Activated CD4-positive, alpha-beta T cell treated with anti-CD3 and anti-CD28 coated beads for 36 hours (primary cell): ENCODE measurements at regions of chr13 and their contacts with region 1.

Region 1: DNA sequence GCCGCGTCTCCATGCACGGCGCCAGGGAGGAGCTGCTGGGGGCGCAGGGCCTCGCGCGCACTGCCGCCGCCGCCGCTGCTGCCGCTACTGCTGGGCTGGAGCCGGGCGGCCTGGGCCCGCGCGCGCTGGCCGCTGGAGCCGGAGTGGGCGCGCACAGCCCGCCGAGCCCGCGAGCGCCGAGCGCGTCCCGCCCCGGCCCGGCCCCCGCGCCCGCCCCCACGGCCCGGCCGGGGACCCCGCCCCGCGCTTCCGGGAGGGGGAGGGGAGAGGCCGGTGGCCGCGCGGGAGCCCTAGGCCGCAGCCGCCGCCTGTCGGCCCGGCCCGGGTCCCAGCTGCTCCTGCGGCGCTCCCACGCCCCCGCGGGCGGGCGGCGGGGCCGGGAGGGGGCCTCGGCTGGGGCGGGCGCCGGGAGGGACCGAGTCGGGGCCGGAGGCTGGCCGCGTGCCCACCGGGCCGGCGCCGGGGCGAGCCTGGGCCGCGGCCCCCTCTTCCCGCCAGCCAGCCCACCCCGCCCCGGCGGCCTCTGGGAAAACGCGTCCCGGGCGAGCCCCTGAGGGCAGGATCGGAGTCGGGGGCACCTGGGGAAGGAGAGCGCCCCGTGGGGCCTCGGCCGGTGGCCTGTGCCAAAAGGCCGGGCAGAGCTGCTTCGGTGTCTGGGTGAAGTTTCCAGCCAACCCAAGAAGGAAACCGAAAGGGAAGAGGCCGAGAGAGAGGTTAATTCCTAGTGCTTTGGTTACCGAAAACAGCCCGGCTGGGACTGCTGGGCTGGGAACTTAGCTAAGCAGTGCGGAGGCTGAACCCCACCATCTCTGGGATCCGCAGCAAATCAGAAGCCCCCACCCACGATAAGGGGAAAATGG is at the start of gene STK24:
- DNase-seq: peak; percentile 75
- ATAC-seq: peak; percentile 42
- H3K4me3 Mint-ChIP-seq: peak within 1 kb of the TSS; percentile 95
- H3K27ac Mint-ChIP-seq: peak within 1 kb of the TSS; percentile 76
- H3K4me1 Mint-ChIP-seq: peaks cover 39% of the 10 kb centered on the region
- H3K27me3 Mint-ChIP-seq: no peaks in the 10 kb centered on the region
- total RNA-seq, gene STK24: 146 to 173 TPM

Region 2: DNA sequence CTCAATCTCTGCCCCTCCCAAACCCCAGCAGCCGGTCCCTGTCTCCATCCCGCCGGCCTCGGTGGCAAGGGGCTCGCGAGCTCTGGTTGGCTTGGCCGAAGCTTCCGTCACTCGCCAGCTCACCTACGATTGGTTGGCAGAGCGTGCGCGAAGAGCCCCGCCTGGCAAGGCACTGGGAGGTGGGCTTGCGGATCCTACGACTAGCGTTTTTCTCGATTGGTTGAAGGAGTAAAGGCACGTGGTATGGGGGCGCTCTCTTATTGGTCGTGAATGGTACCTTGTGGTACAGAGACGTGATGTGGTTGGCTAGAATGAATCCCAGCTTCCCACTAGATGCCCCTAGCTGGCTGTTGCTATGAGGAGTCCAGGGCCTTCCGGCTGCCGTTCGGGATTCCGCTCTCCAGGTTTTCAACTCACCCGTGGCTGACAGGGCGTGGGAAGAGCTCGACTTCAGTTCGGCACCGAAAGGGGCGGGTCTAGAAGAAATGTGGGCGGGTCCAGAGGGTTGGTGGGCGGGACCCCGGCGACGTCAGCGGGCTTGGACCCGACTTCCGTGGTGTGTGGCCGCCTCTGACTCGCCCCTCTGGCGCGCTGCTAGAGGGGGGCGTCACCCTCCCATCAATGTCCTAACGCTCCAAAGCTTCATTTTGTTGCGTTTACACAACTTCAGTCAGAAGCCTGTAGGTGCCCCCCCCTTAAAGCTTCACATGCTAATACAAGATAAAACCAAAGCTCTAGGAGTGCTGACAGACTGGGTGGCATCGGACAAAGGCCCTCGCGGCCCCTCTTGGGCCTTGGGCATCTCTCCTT is 1144.1 kb before region 1 on chr13:
- CTCF ChIA-PET with region 1: no interaction called
- POLR2A ChIA-PET with region 1: no interaction called
- intact Hi-C with region 1: loop called (anchors 2 to 10 kb)
- DNase-seq: peak; percentile 98
- ATAC-seq: peak; percentile 85
- H3K4me3 Mint-ChIP-seq: peak overlapping the region; percentile 94
- H3K27ac Mint-ChIP-seq: peak overlapping the region; percentile 99
- H3K4me1 Mint-ChIP-seq: peaks cover 25% of the 10 kb centered on the region
- H3K27me3 Mint-ChIP-seq: peaks cover 5% of the 10 kb centered on the region

Region 3: DNA sequence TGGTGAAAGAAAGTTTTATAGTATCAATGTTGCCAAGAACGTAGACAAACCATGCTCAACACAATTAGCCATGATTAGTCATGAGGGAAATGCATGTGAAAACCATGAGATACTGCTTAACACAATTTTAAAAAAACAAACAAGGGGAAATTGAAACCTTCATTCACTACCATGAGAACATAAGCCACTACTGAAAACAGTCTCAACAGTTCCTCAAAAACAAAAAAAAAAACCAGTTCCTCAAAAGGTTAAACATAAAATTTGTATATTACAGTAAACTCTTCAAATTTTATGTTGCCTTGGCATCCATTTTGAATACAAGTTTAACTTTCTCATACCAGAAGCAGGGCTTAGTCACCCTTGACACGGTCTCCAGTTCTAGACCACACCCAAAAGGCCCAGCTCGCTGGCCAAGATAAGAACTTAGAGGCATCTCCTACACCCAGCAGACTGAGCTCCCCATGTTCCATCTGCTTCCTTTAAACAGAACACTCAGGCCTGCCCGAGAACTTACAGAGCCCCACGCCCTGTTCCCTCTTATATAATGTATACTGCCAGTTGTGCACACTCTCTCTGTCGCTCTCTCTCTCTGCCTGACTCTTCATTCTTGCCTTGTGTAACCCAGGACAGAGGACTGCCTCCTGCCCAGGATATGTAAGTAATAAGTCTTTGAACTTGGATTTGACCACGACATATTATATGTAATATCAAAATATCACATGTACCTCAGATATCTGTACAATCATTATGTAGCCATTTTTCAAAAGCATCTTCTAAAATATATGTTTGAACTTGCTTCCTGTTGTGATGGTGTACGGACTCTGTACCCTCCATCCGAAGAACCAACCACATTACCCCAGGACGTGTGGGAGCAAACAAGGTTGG is 67.7 kb before region 1 on chr13:
- CTCF ChIA-PET with region 1: no interaction called
- POLR2A ChIA-PET with region 1: interaction called, 6 read pairs
- intact Hi-C with region 1: loop called (anchors 1 to 2 kb)
- DNase-seq: peak; percentile 74
- ATAC-seq: peak; percentile 79
- H3K4me3 Mint-ChIP-seq: peak overlapping the region; percentile 50
- H3K27ac Mint-ChIP-seq: peak overlapping the region; percentile 93
- H3K4me1 Mint-ChIP-seq: peaks cover 96% of the 10 kb centered on the region
- H3K27me3 Mint-ChIP-seq: no peaks in the 10 kb centered on the region

Region 4: GRCh38 chr13:98549006-98549727 is 28.0 kb before region 1 on chr13:
- CTCF ChIA-PET with region 1: interaction called, 6 read pairs
- POLR2A ChIA-PET with region 1: interaction called, 5 read pairs
- intact Hi-C with region 1: loop called (anchors 1 to 2 kb)
- DNase-seq: peak; percentile 35
- ATAC-seq: peak; percentile 28
- H3K4me3 Mint-ChIP-seq: no peak overlapping the region
- H3K27ac Mint-ChIP-seq: peak overlapping the region; percentile 76
- H3K4me1 Mint-ChIP-seq: peaks cover 84% of the 10 kb centered on the region
- H3K27me3 Mint-ChIP-seq: no peaks in the 10 kb centered on the region

Region 5: DNA sequence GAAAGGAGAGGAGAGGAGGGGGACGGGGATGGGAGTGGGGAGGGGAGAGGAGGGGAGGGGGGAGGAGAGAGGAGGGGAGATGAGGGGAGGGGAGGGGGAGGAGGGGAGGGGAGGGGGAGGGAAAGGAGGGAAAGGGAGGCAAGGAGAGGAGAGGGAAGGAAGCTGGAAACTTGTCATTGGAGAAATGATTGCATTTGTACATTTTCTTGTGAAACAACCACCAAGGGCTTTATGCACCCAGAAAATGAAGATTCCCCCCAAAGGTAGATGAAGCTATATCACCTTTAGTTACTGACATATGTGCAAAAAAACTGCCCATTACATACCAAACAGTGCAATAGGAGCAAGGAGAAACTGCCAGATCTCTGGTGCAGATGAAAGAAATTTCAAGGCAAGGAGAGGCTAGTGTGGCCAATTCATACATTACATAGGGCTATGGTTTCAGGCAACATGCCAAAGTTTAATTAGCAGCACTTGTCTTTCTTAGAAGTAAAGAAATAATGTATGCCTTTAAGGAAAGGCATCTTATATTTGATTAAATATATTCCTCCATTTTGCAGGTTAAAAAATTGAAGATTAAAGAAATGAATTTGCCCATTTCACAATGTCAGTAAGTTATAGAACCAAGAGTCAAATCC is 49.2 kb after region 1 on chr13:
- CTCF ChIA-PET with region 1: no interaction called
- POLR2A ChIA-PET with region 1: no interaction called
- intact Hi-C with region 1: no loop called
- DNase-seq: no peak
- ATAC-seq: no peak
- H3K4me3 Mint-ChIP-seq: no peak overlapping the region
- H3K27ac Mint-ChIP-seq: no peak overlapping the region
- H3K4me1 Mint-ChIP-seq: no peaks in the 10 kb centered on the region
- H3K27me3 Mint-ChIP-seq: no peaks in the 10 kb centered on the region

Region 6: GRCh38 chr13:98664039-98664438 is 86.8 kb after region 1 on chr13:
- CTCF ChIA-PET with region 1: interaction called, 4 read pairs
- POLR2A ChIA-PET with region 1: no interaction called
- intact Hi-C with region 1: loop called (anchors 1 to 5 kb)
- DNase-seq: peak; percentile 88
- ATAC-seq: peak; percentile 99
- H3K4me3 Mint-ChIP-seq: peak overlapping the region; percentile 2
- H3K27ac Mint-ChIP-seq: peak overlapping the region; percentile 81
- H3K4me1 Mint-ChIP-seq: peaks cover 16% of the 10 kb centered on the region
- H3K27me3 Mint-ChIP-seq: peaks cover 5% of the 10 kb centered on the region

Region 7: GRCh38 chr13:99200432-99201167 is 623.4 kb after region 1 on chr13 and contains the start of gene UBAC2:
- CTCF ChIA-PET with region 1: no interaction called
- POLR2A ChIA-PET with region 1: no interaction called
- intact Hi-C with region 1: loop called (anchors 5 kb)
- DNase-seq: peak; percentile 98
- ATAC-seq: peak; percentile 77
- H3K4me3 Mint-ChIP-seq: peak within 1 kb of the TSS; percentile 82
- H3K27ac Mint-ChIP-seq: peak within 1 kb of the TSS; percentile 97
- H3K4me1 Mint-ChIP-seq: peaks cover 62% of the 10 kb centered on the region
- H3K27me3 Mint-ChIP-seq: no peaks in the 10 kb centered on the region
- total RNA-seq, gene UBAC2: 48.4 to 56.3 TPM